ENCODE measurements at regions of chr16 and their contacts with region 1.

Region 1: DNA sequence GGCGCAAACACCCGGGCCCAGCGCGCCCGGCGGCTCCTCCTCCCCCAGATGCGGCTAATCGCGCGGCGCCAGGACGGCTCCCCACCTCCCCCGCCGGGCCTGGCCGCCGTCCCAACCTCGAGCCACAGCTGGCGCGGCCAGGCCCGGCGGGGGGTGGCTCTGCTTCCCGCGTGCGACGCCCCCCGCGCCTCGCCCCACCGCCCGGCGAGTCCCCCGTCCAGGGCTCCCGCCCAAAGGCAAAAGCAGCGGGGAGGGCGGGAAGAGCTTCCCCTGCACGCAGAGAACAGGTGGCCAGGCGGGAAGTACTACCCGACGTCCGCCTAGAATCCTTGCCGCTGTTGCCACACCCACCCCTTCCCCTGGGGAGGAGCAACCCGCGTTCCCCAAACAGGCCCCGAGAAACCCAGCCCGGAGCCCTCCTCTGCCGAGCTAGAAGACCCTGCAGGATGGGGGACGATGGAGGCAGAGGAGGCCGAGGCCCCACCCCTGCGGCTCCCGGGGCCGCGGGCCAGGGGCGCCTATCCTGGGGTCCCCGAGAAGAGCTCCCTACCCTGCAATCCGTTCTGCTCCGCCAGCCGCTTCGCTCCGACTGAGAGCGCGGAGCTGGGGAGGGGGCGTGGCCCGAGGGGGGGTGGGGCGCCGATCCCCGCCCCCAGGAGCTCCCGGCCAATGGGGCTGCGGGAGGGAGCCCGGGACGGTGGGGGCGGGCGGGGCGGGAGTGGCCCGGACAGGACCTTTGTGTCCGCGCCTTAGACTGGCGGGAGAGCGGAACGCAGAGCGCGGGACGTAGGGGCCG is at the start of gene CARHSP1:
- DNase-seq: peak; percentile 49 to 88
- H3K4me3 ChIP-seq: peak within 1 kb of the TSS; percentile 74 to 92 (median 78)
- H3K27ac ChIP-seq: peak within 1 kb of the TSS; percentile 84
- H3K4me1 ChIP-seq: peaks cover 19 to 27% (median 27%) of the 10 kb centered on the region in 4 experiments
- H3K27me3 ChIP-seq: no peaks in the 10 kb centered on the region
- CTCF ChIP-seq: no peak
- EP300 ChIP-seq: no peak
- POLR2A ChIP-seq: peak; percentile 83 to 90
- RAD21 ChIP-seq: no peak
- total RNA-seq, gene CARHSP1: 300 and 326 TPM in 2 replicates

Region 2: GRCh38 chr16:8828541-8829165 is 40.0 kb before region 1 on chr16:
- CTCF ChIA-PET with region 1: interaction called, 3 read pairs
- POLR2A ChIA-PET with region 1: interaction called, 24 read pairs
- DNase-seq: no peak
- H3K4me3 ChIP-seq: no peak overlapping the region
- H3K27ac ChIP-seq: no peak overlapping the region
- H3K4me1 ChIP-seq: peaks cover 12 to 23% (median 16%) of the 10 kb centered on the region in 4 experiments
- H3K27me3 ChIP-seq: no peaks in the 10 kb centered on the region
- CTCF ChIP-seq: no peak
- EP300 ChIP-seq: no peak
- POLR2A ChIP-seq: 0 out of 3 replicates have a peak, but pooled peaks of 1 of the 2 experiments have one; percentile 17
- RAD21 ChIP-seq: no peak

Region 3: DNA sequence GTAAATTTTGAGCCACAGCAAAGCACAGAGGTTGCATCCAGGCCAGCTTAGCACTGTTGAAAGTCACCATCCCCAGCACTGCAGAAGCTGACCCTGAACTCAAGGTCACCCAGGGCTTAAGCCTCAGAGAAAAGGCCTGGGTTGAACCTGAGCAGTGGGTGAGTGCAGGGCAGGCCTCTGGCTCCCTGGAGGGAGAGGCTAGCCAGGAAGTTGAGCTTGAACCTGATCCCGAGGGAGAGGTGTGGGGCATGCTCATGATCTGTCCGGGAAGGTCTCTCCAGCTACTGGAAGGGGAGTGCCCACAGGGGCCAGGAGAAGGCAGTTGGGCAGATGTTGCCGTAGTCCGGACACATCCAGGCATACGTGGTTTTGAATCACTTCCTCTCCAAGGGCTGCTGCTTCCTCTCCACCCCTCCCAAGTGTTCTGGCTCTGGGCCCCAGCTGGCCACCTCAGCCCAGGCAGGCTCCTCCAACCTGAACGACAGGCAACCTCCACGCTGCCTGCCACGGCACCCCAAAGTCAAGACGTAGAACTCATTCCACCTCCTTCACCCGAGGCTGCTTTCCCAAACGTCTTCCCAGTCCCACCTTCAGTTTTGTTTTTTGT is 18.2 kb before region 1 on chr16:
- CTCF ChIA-PET with region 1: interaction called, 90 read pairs
- POLR2A ChIA-PET with region 1: interaction called, 456 read pairs
- DNase-seq: no peak
- H3K4me3 ChIP-seq: no peak overlapping the region
- H3K27ac ChIP-seq: no peak overlapping the region
- H3K4me1 ChIP-seq: peaks cover 0 to 19% (median 9%) of the 10 kb centered on the region in 4 experiments; a peak in 6 of 7 replicates
- H3K27me3 ChIP-seq: no peaks in the 10 kb centered on the region
- CTCF ChIP-seq: no peak
- EP300 ChIP-seq: no peak
- POLR2A ChIP-seq: peak; percentile 47 to 62; a peak in 1 of 3 replicates
- RAD21 ChIP-seq: no peak

Region 4: DNA sequence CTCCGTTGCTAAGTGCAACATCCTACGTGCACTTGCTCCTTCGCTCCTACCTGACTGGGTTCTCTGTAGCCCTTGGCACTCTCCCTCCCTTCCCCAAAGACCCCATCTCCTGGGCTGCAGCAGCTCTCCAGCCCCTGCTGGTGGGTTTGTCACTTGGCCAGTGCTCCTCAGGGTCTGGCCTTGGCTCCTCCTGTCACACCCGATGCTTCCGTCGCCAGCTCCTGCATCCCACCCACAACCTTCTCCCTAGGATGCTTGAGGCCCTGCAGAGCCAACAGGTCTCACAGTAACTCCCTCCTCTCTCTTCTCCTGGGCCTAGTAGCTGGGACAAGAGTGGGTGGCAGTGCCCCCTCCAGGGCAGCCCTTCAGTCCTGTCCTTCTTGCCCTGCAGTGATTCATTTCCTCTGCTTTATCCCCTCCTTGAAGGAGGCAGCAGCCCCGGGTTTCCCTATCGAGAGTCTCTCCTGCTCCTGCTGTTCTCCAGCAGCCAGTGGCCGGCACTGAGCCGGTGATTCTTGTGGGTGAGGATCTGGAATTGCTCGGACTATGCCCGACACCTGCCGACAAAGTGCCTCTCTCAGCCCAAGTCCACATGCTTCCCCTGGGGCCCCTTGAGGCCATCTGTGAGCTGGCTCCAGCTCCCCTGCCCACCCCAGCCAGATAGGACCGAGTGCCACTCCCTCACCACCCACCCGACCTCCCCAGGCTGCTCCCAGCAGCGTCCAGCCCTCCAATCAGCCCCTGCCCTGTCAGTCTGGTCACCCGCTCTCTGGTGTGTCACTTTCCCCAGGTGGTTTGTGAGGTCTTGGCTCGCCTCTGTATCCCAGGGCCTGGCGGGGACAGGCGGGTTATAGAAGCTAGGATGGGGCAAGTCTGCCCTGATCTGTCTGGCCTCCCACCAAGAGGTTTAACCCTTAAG is 17.3 kb after region 1 on chr16:
- CTCF ChIA-PET with region 1: interaction called, 52 read pairs
- POLR2A ChIA-PET with region 1: interaction called, 456 read pairs
- DNase-seq: no peak
- H3K4me3 ChIP-seq: no peak overlapping the region; a peak in 1 of 8 replicates
- H3K27ac ChIP-seq: no peak overlapping the region
- H3K4me1 ChIP-seq: peaks cover 0 to 17% (median 9%) of the 10 kb centered on the region in 4 experiments; a peak in 5 of 7 replicates
- H3K27me3 ChIP-seq: no peaks in the 10 kb centered on the region
- CTCF ChIP-seq: peak; percentile 27 to 47 (median 30); a peak in 3 of 4 replicates
- EP300 ChIP-seq: no peak
- POLR2A ChIP-seq: no peak
- RAD21 ChIP-seq: peak in 1 of 2 experiments; percentile 30; a peak in 2 of 4 replicates

Region 5: GRCh38 chr16:8943966-8944759 is 75.5 kb after region 1 on chr16:
- CTCF ChIA-PET with region 1: no interaction called
- POLR2A ChIA-PET with region 1: no interaction called
- DNase-seq: no peak
- H3K4me3 ChIP-seq: peak overlapping the region in 1 of 4 experiments; percentile 16; a peak in 1 of 8 replicates
- H3K27ac ChIP-seq: no peak overlapping the region
- H3K4me1 ChIP-seq: peaks cover 6 to 15% (median 10%) of the 10 kb centered on the region in 4 experiments
- H3K27me3 ChIP-seq: no peaks in the 10 kb centered on the region
- CTCF ChIP-seq: no peak
- EP300 ChIP-seq: no peak
- POLR2A ChIP-seq: no peak
- RAD21 ChIP-seq: no peak

Measured in H1 (cell line).